Activated T-helper 2 cell treated with anti-CD3 and anti-CD28 coated beads, Interferon-gamma antibody, Interleukin-2, Interleukin-4, amounts not matched to agents 10 μg/mL and 5 μg/mL and 100 μg/mL, durations not matched to agents 14 hours and 24 hours and 36 hours (primary cell): ENCODE measurements at regions of chr10 and their contacts with region 1.

Region 1: GRCh38 chr10:23293145-23293724 is 51.4 kb downstream of the C10orf67 start:
- DNase-seq: no peak
- H3K4me3 Mint-ChIP-seq: no peak overlapping the region
- H3K27ac Mint-ChIP-seq: no peak overlapping the region
- H3K4me1 Mint-ChIP-seq: no peaks in the 10 kb centered on the region
- H3K27me3 Mint-ChIP-seq: peaks cover 12% of the 10 kb centered on the region

Region 2: GRCh38 chr10:23120001-23120934 is 173.0 kb before region 1 on chr10:
- intact Hi-C with region 1: no loop called
- DNase-seq: no peak
- H3K4me3 Mint-ChIP-seq: no peak overlapping the region
- H3K27ac Mint-ChIP-seq: no peak overlapping the region
- H3K4me1 Mint-ChIP-seq: no peaks in the 10 kb centered on the region
- H3K27me3 Mint-ChIP-seq: no peaks in the 10 kb centered on the region

Region 3: GRCh38 chr10:23158370-23158769 is 134.9 kb before region 1 on chr10:
- intact Hi-C with region 1: loop called (anchors 1 kb)
- DNase-seq: no peak
- H3K4me3 Mint-ChIP-seq: no peak overlapping the region
- H3K27ac Mint-ChIP-seq: no peak overlapping the region
- H3K4me1 Mint-ChIP-seq: peaks cover 10% of the 10 kb centered on the region
- H3K27me3 Mint-ChIP-seq: peaks cover 7% of the 10 kb centered on the region

Region 4: GRCh38 chr10:23270531-23270930 is 22.7 kb before region 1 on chr10:
- intact Hi-C with region 1: no loop called
- DNase-seq: no peak
- H3K4me3 Mint-ChIP-seq: no peak overlapping the region
- H3K27ac Mint-ChIP-seq: no peak overlapping the region
- H3K4me1 Mint-ChIP-seq: no peaks in the 10 kb centered on the region
- H3K27me3 Mint-ChIP-seq: no peaks in the 10 kb centered on the region

Region 5: DNA sequence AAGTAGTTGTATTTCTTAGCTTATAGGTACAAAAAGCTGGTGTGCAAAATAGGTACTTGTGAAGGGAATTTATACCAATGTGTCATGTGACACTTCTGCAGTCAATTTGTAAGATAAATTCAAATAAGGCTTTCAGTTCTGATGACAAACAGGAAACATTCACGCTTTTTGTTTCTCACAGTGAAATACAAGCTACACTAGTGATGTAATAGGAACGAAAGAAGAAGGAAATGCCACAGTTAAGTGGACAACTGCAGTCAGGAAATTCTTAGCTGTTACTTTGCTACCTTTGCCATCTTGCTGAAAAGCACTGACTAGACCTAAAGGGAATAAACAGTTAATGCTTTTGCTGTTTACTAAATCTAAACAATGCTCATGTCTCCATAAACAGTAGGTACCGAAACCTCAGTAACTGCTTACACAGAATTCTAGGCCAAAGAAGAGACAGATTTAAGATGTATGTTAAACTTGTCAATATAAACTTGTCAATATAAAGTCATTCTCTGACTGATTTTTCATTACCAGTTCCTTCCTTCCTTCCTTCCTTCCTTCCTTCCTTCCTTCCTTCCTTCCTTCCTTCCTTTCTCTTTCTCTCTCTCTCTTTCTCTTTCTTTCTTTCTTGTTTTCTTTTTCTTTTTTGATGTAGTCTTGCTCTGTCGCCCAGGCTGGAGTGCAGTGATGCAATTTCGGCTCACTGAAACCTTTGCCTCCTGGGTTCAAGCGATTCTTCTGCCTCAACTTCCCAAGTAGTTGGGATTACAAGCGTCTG is 155.8 kb after region 1 on chr10:
- intact Hi-C with region 1: no loop called
- DNase-seq: no peak
- H3K4me3 Mint-ChIP-seq: no peak overlapping the region
- H3K27ac Mint-ChIP-seq: peak overlapping the region; percentile 74
- H3K4me1 Mint-ChIP-seq: peaks cover 33% of the 10 kb centered on the region
- H3K27me3 Mint-ChIP-seq: no peaks in the 10 kb centered on the region